Calu3 (cell line): ENCODE measurements at regions of chr6 and their contacts with region 1.

Region 1: GRCh38 chr6:3162565-3163247 is 5.4 kb upstream of the TUBB2A start:
- DNase-seq: peak; percentile 68
- H3K4me3 Mint-ChIP-seq: peak overlapping the region; percentile 69
- H3K27ac Mint-ChIP-seq: no peak overlapping the region
- H3K4me1 Mint-ChIP-seq: peaks cover 18% of the 10 kb centered on the region
- H3K27me3 Mint-ChIP-seq: no peaks in the 10 kb centered on the region
- CTCF ChIP-seq: no peak

Region 2: GRCh38 chr6:2783188-2783963 is 379.3 kb before region 1 on chr6:
- CTCF ChIA-PET with region 1: no interaction called
- intact Hi-C with region 1: no loop called
- DNase-seq: no peak
- H3K4me3 Mint-ChIP-seq: no peak overlapping the region
- H3K27ac Mint-ChIP-seq: no peak overlapping the region
- H3K4me1 Mint-ChIP-seq: no peaks in the 10 kb centered on the region
- H3K27me3 Mint-ChIP-seq: no peaks in the 10 kb centered on the region
- CTCF ChIP-seq: no peak

Region 3: GRCh38 chr6:3068329-3069214 is 94.1 kb before region 1 on chr6 and contains the start of gene RIPK1:
- CTCF ChIA-PET with region 1: no interaction called
- intact Hi-C with region 1: no loop called
- DNase-seq: peak; percentile 93
- H3K4me3 Mint-ChIP-seq: peak within 1 kb of the TSS; percentile 89
- H3K27ac Mint-ChIP-seq: peak within 1 kb of the TSS; percentile 64
- H3K4me1 Mint-ChIP-seq: no peaks in the 10 kb centered on the region
- H3K27me3 Mint-ChIP-seq: no peaks in the 10 kb centered on the region
- CTCF ChIP-seq: no peak
- total RNA-seq, gene RIPK1: 11.5 and 11.6 TPM in 2 replicates

Region 4: DNA sequence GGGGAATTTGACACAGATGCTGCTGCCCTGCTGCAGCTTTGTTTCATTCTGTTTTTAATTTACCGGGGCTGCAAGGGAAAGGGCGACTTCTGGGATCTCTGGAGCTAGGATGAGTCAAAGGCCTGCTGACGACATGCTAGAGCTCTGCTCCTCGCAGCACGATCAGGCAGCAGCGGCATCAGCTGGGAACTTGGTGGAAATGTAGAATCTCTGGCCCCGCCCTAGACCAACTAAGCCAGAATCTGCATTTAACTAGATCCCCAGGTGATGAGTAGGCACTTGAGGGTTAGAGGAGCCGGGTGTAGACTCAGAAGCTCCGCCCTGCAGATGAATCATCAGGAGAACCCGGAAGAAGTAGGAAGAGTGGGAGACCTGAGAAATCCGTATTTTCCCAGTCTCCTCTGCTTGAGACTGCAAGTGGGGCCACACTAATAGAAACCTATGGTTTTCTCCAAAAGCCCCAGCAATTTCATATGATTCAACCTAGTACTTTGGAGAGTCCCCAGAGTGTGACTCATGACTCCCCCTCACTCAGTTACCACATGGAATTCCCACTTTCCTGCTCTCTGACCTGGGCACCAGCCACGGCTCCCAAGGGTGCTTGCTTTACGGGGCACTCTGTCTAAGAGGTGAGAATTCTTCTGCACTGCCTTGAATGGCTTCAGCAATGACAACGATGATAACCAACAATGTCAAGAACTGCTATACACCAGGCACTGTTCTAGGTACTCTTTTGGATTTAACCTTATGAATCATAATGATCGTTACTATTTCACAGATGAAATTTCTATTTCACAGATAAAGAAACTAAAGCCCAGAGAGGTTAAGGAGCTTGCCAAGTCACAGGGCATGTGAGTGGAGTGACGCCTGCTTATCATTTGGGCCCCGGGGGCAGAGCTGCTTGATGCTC is 46.7 kb after region 1 on chr6:
- CTCF ChIA-PET with region 1: interaction called, 4 read pairs
- intact Hi-C with region 1: loop called (anchors 5 kb)
- DNase-seq: peak; percentile 76
- H3K4me3 Mint-ChIP-seq: peak overlapping the region; percentile 28
- H3K27ac Mint-ChIP-seq: peak overlapping the region; percentile 70
- H3K4me1 Mint-ChIP-seq: peaks cover 25% of the 10 kb centered on the region
- H3K27me3 Mint-ChIP-seq: peaks cover 11% of the 10 kb centered on the region
- CTCF ChIP-seq: no peak